Activated B cell treated with CpG ODN at 0.5 μM for 24 hours (primary cell): ENCODE measurements at regions of chr12 and their contacts with region 1.

Region 1: GRCh38 chr12:56029666-56030293 is 8.9 kb downstream of the IKZF4 start:
- DNase-seq: no peak
- ATAC-seq: peak; percentile 71
- H3K4me3 Mint-ChIP-seq: no peak overlapping the region
- H3K27ac Mint-ChIP-seq: no peak overlapping the region
- H3K4me1 Mint-ChIP-seq: no peaks in the 10 kb centered on the region
- H3K27me3 Mint-ChIP-seq: no peaks in the 10 kb centered on the region
- CTCF ChIP-seq: no peak

Region 2: DNA sequence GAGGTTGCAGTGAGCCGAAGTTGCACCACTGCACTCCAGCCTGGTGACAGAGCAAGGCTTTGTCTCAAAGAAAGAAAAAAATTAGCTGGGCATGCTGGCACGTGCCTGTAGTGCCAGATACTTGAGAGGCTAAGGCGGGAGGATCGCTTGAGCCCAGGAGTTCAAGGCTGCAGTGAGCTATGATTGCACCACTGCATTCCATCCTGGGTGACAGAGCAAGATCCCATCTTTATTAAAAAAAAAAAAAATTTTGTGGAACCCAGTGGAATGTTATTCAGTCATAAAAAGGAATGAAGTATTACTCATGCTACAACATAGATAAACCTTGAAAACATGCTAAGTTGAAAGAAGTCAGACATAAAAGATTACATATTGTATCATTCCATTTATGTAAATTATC is 41.9 kb after region 1 on chr12:
- CTCF ChIA-PET with region 1: no interaction called
- POLR2A ChIA-PET with region 1: interaction called, 12 read pairs
- intact Hi-C with region 1: no loop called
- DNase-seq: no peak
- ATAC-seq: no peak
- H3K4me3 Mint-ChIP-seq: no peak overlapping the region
- H3K27ac Mint-ChIP-seq: no peak overlapping the region
- H3K4me1 Mint-ChIP-seq: no peaks in the 10 kb centered on the region
- H3K27me3 Mint-ChIP-seq: peaks cover 3% of the 10 kb centered on the region
- CTCF ChIP-seq: no peak